Heart left ventricle (tissue), 16 donors: ENCODE measurements at regions of chr19 and their contacts with region 1.

Region 1: GRCh38 chr19:36152352-36153091 is at the start of gene COX7A1:
- DNase-seq: peak; percentile 88 to 93 (median 90)
- ATAC-seq: peak; percentile 91 to 93 (median 92)
- H3K4me3 ChIP-seq: peak within 1 kb of the TSS; percentile 57 to 94 (median 79)
- H3K27ac ChIP-seq: peak within 1 kb of the TSS; percentile 97 to 100 (median 99)
- H3K4me1 ChIP-seq: peaks cover 0 to 45% (median 25%) of the 10 kb centered on the region in 12 donors
- H3K27me3 ChIP-seq: no peaks in the 10 kb centered on the region
- CTCF ChIP-seq: no peak
- POLR2A ChIP-seq: peak; percentile 78 to 80
- total RNA-seq, gene COX7A1: 414 to 2,982 (median 2,187) TPM

Region 2: DNA sequence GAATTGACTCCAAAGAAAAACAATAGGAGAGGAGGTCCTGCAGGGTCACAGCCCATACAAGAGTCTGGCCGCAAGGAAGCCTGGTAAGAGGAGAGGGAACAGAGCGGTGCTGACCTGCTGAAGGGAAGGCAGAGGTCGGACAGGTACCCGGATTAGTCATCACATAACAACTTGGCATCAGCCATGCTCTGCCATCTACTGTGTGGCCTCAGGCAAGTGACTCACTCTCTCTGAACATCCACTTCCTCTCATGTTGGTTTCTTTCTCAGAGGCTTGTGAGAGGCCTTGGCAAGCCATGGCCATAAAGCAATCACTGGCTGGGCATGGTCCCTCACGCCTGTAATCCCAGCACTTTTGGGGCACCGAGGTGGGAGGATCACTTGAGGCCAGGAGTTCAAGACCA is 20.0 kb before region 1 on chr19:
- intact Hi-C with region 1: loop called in 1 of 10 experiments (anchors 1 kb)
- DNase-seq: no peak
- ATAC-seq: no peak
- H3K4me3 ChIP-seq: no peak overlapping the region
- H3K27ac ChIP-seq: peak overlapping the region in 1 of 12 donors; percentile 61
- H3K4me1 ChIP-seq: peaks cover 0 to 54% (median 11%) of the 10 kb centered on the region in 12 donors
- H3K27me3 ChIP-seq: no peaks in the 10 kb centered on the region
- CTCF ChIP-seq: no peak
- POLR2A ChIP-seq: no peak

Region 3: GRCh38 chr19:36139473-36140303 is 12.8 kb before region 1 on chr19 and contains the start of gene CAPNS1:
- intact Hi-C with region 1: loop called in 5 of 10 experiments (anchors 1 kb)
- DNase-seq: peak; percentile 98 to 99 (median 99)
- ATAC-seq: peak; percentile 91 to 93 (median 92)
- H3K4me3 ChIP-seq: peak within 1 kb of the TSS; percentile 80 to 100 (median 95)
- H3K27ac ChIP-seq: peak within 1 kb of the TSS; percentile 93 to 100 (median 99)
- H3K4me1 ChIP-seq: peaks cover 0 to 30% (median 16%) of the 10 kb centered on the region in 12 donors
- H3K27me3 ChIP-seq: no peaks in the 10 kb centered on the region
- CTCF ChIP-seq: peak in 5 of 12 donors; percentile 14 to 19 (median 17)
- POLR2A ChIP-seq: peak; percentile 95 to 97
- total RNA-seq, gene CAPNS1: 272 to 1,054 (median 860) TPM

Region 4: DNA sequence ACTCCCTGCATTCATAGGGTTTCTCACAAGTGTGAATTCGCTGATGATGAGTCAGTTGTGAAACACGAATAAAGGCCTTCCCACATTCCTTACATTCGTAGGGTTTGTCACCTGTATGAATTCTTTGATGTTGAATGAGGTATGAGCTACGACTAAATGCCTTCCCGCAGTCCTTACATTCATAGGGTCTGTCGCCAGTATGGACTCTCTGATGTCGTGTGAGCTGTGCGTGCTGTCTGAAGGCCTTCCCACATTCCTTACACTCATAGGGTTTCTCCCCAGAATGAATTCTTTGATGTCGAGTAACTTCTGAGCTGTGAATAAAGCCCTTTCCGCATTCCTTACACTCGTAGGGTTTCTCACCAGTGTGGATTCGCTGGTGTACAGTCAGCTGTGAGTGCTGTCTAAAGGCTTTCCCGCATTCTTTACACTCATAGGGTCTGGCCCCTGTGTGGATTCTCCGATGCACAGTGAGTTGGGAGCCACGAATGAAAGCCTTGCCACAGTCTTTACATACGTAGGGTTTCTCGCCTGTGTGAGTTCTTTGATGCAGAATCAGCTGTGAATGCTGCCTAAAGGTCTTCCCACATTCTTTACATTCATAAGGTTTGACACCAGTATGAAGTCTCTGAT is 30.2 kb after region 1 on chr19:
- intact Hi-C with region 1: no loop called
- DNase-seq: no peak
- ATAC-seq: peak in 3 of 4 donors; percentile 23 to 34 (median 24)
- H3K4me3 ChIP-seq: no peak overlapping the region
- H3K27ac ChIP-seq: peak overlapping the region in 6 of 12 donors; percentile 50 to 75 (median 62)
- H3K4me1 ChIP-seq: peaks cover 0 to 9% (median 0%) of the 10 kb centered on the region in 12 donors
- H3K27me3 ChIP-seq: no peaks in the 10 kb centered on the region
- CTCF ChIP-seq: no peak
- POLR2A ChIP-seq: no peak